ENCODE measurements at regions of chr7 and their contacts with region 1.

Region 1: GRCh38 chr7:35424869-35425495 is 171.1 kb upstream of the TBX20 start:
- DNase-seq: peak; percentile 36
- ATAC-seq: peak; percentile 91
- H3K4me3 ChIP-seq: no peak overlapping the region
- H3K27ac ChIP-seq: no peak overlapping the region
- H3K4me1 ChIP-seq: no peaks in the 10 kb centered on the region
- H3K27me3 ChIP-seq: peaks cover 26% of the 10 kb centered on the region
- CTCF ChIP-seq: peak; percentile 93

Region 2: DNA sequence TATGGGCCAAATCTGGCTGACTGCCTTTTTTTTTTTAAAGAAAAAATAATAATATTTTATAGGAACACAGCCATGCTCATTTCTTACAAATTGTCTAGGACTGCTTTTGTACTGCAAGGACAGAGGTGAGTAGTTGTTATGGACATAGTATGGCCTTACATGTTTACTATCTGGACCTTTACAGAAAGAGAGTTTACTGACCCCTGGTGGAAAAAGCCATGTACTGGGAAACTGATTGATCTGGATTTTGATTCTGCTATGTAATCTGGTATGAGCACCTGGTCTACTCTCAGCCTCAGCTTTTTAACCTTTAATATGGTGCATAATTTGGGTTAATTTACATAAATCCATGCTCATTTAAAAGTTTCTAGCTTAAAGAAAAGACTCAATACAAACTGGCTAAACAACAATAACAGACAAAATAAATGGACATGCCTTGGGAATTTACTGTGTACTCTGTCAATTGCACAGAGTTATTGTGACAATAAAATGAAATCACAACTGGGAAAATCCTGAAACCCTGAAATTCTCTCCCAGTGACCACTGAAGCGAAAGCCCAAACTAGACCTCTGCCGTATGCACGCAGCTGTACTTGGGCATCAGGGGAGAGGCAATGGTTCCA is 1258.9 kb before region 1 on chr7:
- CTCF ChIA-PET with region 1: no interaction called
- POLR2A ChIA-PET with region 1: no interaction called
- in situ Hi-C with region 1: no loop called
- intact Hi-C with region 1: no loop called
- DNase-seq: no peak
- ATAC-seq: no peak
- H3K4me3 ChIP-seq: no peak overlapping the region
- H3K27ac ChIP-seq: no peak overlapping the region
- H3K4me1 ChIP-seq: no peaks in the 10 kb centered on the region
- H3K27me3 ChIP-seq: no peaks in the 10 kb centered on the region
- CTCF ChIP-seq: peak; percentile 50; the same call in 1 of the 2 replicates

Region 3: GRCh38 chr7:35401217-35401879 is 23.6 kb before region 1 on chr7:
- CTCF ChIA-PET with region 1: no interaction called
- POLR2A ChIA-PET with region 1: no interaction called
- in situ Hi-C with region 1: no loop called
- intact Hi-C with region 1: no loop called
- DNase-seq: no peak
- ATAC-seq: no peak
- H3K4me3 ChIP-seq: no peak overlapping the region
- H3K27ac ChIP-seq: no peak overlapping the region
- H3K4me1 ChIP-seq: no peaks in the 10 kb centered on the region
- H3K27me3 ChIP-seq: no peaks in the 10 kb centered on the region; the same call in 1 of the 2 replicates
- CTCF ChIP-seq: no peak

Region 4: DNA sequence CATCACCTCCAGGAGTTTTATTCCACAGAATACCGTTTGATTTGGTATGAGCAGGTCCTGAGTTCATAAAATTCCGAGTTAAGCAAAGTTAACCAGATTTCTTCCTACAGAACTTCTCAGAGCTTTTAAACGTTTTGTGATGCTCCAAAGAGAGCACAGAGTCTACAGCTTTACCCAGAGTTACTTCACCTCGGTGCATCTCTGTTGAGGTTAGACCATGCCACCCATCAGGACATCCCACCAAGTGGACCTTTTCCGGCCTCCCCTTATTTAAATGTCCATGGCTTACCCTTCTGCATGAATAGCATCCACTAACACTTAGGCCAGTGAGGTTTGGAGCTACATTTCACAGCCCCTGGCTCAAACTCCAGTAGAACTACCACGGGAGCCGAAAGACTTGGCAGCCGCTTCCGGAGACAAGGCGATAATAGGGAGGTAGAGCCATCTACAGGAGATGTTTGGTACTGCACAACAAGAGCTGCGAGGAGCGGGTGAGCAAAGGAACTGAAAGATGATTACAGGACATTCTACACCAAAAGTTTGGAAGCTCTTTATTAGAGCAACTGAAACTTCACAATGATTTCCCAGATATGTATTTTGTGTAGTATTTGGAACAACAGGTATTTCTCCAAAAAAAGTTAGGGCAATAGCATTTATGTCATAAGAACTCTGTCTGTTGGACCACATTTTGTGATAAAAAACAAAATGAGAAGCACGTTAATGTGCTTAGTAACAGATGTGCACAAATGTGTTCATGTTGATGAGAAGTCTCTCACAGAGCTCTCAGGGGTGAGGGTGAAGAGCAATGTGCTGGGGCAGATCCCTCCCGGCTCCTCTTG is 95.2 kb after region 1 on chr7:
- CTCF ChIA-PET with region 1: interaction called, 13 read pairs
- POLR2A ChIA-PET with region 1: no interaction called
- in situ Hi-C with region 1: no loop called
- intact Hi-C with region 1: loop called (anchors 1 kb)
- DNase-seq: peak; percentile 60
- ATAC-seq: peak; percentile 89
- H3K4me3 ChIP-seq: no peak overlapping the region
- H3K27ac ChIP-seq: no peak overlapping the region
- H3K4me1 ChIP-seq: no peaks in the 10 kb centered on the region
- H3K27me3 ChIP-seq: peaks cover 35% of the 10 kb centered on the region
- CTCF ChIP-seq: peak; percentile 96

Region 5: DNA sequence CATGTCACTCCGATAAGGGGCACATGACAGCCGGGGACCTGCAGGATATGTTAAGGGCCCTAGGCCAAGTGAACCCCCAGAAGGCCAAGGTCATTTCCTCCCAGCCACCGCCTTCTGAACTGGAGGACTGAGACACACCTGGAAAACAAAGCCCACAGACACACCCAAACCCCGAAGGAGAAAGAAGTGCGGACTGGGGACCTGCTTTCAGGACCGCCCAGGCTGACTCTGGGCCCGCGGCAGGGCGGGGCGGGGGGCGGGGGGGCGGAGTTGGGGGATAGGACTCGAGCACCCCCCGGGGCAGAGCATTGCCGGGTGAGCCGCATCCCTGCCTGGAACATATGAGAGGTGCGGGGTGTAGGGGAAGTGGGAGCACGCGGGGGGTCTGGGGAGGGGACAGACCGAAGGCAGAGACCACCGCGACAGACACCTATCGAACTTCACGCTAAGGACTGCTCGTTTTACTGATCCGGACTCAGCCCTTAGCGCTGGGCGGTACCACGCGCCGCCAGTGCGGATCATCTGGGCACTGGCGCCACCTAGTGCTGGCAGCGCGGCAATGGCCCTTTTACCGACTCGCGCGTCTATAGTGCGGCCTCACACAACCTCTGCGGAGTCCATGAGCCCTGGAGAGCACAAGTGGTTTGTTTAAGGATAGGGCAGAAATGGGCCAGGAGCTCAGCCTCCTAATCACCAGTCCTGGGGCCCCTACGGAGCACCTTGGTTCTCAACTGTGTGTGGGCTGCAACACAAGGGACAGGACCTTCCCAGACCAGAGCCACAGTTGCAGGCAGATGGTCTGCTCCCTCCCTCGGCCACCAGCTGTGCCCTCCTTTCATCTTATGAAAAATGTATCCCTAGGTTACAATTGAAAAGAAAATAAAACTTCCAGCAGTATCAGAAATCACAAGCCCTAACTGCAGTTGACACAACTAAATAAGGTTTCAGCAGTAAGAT is 112.4 kb after region 1 on chr7:
- CTCF ChIA-PET with region 1: no interaction called
- POLR2A ChIA-PET with region 1: no interaction called
- in situ Hi-C with region 1: no loop called
- intact Hi-C with region 1: loop called (anchors 5 kb)
- DNase-seq: peak; percentile 50
- ATAC-seq: peak; percentile 99
- H3K4me3 ChIP-seq: peak overlapping the region; percentile 20 to 41; a peak in 3 of 4 replicates
- H3K27ac ChIP-seq: no peak overlapping the region
- H3K4me1 ChIP-seq: no peaks in the 10 kb centered on the region
- H3K27me3 ChIP-seq: peaks cover 26% of the 10 kb centered on the region
- CTCF ChIP-seq: peak; percentile 97

Region 6: DNA sequence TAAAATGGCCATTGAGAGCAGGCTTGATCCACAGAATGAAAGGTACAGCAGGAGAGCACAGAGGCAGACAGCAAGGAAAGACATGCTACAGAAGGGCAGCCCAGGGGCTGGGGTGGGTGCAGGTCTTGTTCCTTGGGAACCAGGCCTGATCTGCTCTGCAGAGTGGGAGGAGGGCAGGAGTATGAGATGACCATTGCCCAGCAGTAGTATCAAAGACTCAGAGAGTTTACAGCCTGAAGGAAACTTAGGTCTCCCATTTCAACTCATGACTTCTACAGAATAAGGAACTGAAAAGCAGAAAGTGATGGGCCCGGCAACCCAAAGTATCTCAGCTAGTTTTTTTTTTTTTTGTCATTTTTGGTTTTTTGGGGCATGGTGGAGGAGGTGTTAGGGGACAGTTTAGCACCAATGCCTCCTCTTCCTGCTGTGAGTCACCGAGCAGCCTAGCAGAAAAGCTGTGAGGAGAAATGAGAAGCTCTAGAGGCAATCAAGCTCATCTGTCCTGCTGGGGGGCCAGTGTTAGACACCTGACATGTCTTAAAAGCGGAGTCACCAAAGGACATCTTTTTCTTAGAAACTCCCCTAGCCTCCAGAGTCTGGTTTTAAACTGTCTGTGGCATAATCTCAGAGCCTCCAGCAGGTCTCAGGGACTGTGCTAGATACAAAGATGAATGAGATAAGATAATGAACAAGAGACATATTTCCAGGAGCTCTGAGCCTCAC is 304.2 kb after region 1 on chr7:
- CTCF ChIA-PET with region 1: no interaction called
- POLR2A ChIA-PET with region 1: no interaction called
- in situ Hi-C with region 1: no loop called
- intact Hi-C with region 1: no loop called
- DNase-seq: no peak
- ATAC-seq: no peak
- H3K4me3 ChIP-seq: no peak overlapping the region
- H3K27ac ChIP-seq: no peak overlapping the region
- H3K4me1 ChIP-seq: no peaks in the 10 kb centered on the region
- H3K27me3 ChIP-seq: peaks cover 2% of the 10 kb centered on the region; the same call in 1 of the 2 replicates
- CTCF ChIP-seq: no peak